ENCODE measurements at regions of chr2 and their contacts with region 1.

Region 1: GRCh38 chr2:237752761-237753165 is 45.8 kb upstream of the RBM44 start:
- DNase-seq: no peak
- H3K4me3 ChIP-seq: no peak overlapping the region
- H3K27ac ChIP-seq: no peak overlapping the region
- H3K27me3 ChIP-seq: no peaks in the 10 kb centered on the region
- CTCF ChIP-seq: no peak

Region 2: DNA sequence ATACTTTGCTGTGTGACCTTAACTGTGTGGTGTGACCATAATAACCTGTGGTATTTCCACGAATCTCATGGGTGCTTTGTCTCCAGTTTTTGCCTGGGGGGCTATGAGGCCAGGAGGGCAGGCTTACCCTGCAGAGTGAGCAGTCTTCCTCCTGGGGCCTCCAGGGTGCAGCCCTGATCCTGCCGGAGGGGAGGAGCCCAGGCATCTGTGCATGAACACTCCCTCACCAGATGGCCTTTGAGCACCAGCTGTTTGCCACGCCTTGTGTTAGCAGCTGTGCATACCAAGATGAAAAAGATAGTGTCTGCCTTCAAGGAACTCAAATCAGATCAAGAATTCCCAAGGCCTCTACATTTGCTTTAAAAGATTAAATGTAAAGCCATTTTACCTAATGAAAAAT is 29.2 kb before region 1 on chr2:
- CTCF ChIA-PET with region 1: no interaction called
- POLR2A ChIA-PET with region 1: interaction called, 10 read pairs
- DNase-seq: no peak
- H3K4me3 ChIP-seq: no peak overlapping the region
- H3K27ac ChIP-seq: no peak overlapping the region
- H3K27me3 ChIP-seq: no peaks in the 10 kb centered on the region
- CTCF ChIP-seq: no peak